Activated CD8-positive, alpha-beta memory T cell treated with anti-CD3 and anti-CD28 coated beads, Interleukin-2, amount 10 ng/mL, durations not matched to agents 7 days and 5 days (primary cell): ENCODE measurements at regions of chr12 and their contacts with region 1.

Region 1: GRCh38 chr12:57846577-57847319 is at the start of gene CTDSP2:
- DNase-seq: peak; percentile 91
- ATAC-seq: peak; percentile 53
- H3K4me3 Mint-ChIP-seq: peak within 1 kb of the TSS; percentile 74
- H3K27ac Mint-ChIP-seq: peak within 1 kb of the TSS; percentile 65
- H3K4me1 Mint-ChIP-seq: peaks cover 33% of the 10 kb centered on the region
- H3K27me3 Mint-ChIP-seq: peaks cover 26% of the 10 kb centered on the region
- total RNA-seq, gene CTDSP2: 76.2 to 103 TPM

Region 2: GRCh38 chr12:57893431-57894353 is 46.9 kb after region 1 on chr12:
- CTCF ChIA-PET with region 1: interaction called, 11 read pairs
- DNase-seq: no peak
- ATAC-seq: no peak
- H3K4me3 Mint-ChIP-seq: no peak overlapping the region
- H3K27ac Mint-ChIP-seq: no peak overlapping the region
- H3K4me1 Mint-ChIP-seq: peaks cover 33% of the 10 kb centered on the region
- H3K27me3 Mint-ChIP-seq: peaks cover 35% of the 10 kb centered on the region

Region 3: DNA sequence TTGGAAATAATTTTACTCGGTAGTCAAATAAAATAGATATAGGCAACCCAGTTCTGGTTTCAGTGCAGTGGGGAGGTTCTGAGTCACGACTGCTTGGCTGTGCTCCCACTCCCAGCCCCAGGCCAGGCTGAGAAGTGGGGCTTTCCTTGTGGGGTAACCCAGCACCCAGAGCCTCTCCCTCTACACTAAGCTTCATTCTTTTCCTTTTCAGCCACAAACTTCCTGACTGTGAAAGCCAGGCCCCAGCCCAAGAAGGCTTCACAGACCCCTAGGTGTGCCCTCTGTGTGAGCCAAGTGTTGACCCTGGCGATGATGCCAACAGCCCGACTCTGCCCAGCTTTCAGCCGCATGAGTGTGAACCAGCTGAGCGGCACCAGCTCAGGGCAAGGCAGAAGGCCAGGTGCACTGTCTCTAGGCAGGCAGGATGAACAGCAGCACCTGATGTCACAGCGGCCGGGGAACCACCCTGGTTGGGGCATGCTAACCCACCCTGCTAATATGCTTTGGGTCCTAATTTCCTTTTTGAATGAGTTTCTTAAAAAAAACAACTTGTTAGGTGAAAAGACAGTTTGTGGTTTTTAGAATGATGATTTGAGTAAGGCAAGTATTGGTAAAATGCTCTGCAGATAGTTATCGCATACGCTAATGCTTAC is 52.4 kb after region 1 on chr12:
- CTCF ChIA-PET with region 1: interaction called, 42 read pairs
- DNase-seq: peak; percentile 92
- ATAC-seq: peak; percentile 90
- H3K4me3 Mint-ChIP-seq: peak overlapping the region; percentile 47
- H3K27ac Mint-ChIP-seq: peak overlapping the region; percentile 98
- H3K4me1 Mint-ChIP-seq: peaks cover 45% of the 10 kb centered on the region
- H3K27me3 Mint-ChIP-seq: peaks cover 17% of the 10 kb centered on the region